ENCODE measurements at regions of chr4 and their contacts with region 1.

Region 1: DNA sequence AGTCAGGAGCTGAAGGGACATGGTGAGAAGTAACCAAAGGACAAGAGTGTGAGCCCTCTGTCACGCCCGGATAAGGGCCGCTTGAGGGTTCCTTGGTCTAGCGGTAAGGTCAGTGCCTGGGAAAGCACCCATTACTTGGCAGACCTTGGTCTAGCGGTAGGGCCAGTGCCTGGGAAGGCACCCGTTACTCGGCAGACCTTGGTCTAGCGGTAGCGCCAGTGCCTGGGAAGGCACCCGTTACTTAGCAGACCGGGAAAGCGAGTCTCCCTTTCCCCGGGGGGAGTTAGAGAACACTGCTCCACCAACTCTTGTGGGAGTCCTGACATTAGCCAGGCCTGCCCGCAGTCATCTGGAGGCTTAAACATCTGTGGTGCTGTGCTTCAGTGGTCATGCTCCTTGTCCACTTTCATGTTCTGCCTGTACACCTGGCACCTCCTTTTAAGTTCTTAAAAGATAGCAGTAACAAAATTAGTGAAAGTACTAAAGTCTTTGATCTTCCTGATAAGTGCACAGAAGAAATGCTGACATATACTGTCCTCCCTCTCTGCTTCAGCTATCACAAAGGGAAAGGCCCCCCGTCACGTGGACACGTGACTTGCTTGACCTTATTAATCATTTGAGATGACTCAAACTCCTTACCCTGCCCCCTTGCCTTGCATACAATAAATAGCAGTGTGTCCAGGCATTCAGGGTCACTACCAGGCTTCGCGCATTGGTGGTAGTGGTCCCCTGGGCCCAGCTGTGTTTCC is 9.3 kb upstream of the SEC24B start:
- DNase-seq: no peak
- ATAC-seq: no peak
- H3K4me3 ChIP-seq: no peak overlapping the region
- H3K4me3 Mint-ChIP-seq: no peak overlapping the region
- H3K27ac ChIP-seq: no peak overlapping the region
- H3K27ac Mint-ChIP-seq: no peak overlapping the region
- H3K4me1 ChIP-seq: no peaks in the 10 kb centered on the region
- H3K4me1 Mint-ChIP-seq: peaks cover 2% of the 10 kb centered on the region
- H3K27me3 ChIP-seq: no peaks in the 10 kb centered on the region
- H3K27me3 Mint-ChIP-seq: no peaks in the 10 kb centered on the region
- CTCF ChIP-seq: no peak

Region 2: DNA sequence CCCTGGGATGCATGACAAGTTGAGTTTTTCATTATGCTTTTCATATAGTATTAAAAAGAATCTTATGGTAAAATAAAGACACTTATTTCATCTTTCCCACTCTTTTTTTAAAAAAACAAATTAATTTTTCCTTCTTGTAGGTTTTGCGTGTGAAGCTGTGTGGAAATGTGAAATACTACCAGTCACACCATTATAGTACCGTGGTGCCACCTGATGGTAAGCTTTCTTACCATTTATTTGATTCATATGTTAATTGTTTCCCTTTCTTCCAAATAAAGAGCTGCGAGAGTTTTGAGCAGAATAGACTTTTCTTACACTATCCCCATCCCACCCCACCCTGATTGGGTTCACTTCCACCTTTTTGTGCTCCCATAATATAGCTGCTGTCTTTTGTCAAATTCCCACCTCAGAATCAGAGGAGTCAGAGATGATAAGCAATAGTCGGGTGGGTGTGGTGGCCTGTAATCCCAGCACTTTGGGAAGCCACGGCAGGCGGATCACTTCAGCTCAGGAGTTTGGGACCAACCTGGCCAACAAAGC is 234.7 kb after region 1 on chr4:
- CTCF ChIA-PET with region 1: interaction called, 4 read pairs
- POLR2A ChIA-PET with region 1: no interaction called
- intact Hi-C with region 1: loop called (anchors 1 kb)
- DNase-seq: peak in 3 of 9 experiments; percentile 27 to 53 (median 45)
- ATAC-seq: peak; percentile 58
- H3K4me3 ChIP-seq: no peak overlapping the region
- H3K4me3 Mint-ChIP-seq: no peak overlapping the region
- H3K27ac ChIP-seq: no peak overlapping the region
- H3K27ac Mint-ChIP-seq: peak overlapping the region; percentile 3
- H3K4me1 ChIP-seq: peaks cover 35% of the 10 kb centered on the region
- H3K4me1 Mint-ChIP-seq: peaks cover 59% of the 10 kb centered on the region
- H3K27me3 ChIP-seq: no peaks in the 10 kb centered on the region
- H3K27me3 Mint-ChIP-seq: no peaks in the 10 kb centered on the region
- CTCF ChIP-seq: no peak

Region 3: DNA sequence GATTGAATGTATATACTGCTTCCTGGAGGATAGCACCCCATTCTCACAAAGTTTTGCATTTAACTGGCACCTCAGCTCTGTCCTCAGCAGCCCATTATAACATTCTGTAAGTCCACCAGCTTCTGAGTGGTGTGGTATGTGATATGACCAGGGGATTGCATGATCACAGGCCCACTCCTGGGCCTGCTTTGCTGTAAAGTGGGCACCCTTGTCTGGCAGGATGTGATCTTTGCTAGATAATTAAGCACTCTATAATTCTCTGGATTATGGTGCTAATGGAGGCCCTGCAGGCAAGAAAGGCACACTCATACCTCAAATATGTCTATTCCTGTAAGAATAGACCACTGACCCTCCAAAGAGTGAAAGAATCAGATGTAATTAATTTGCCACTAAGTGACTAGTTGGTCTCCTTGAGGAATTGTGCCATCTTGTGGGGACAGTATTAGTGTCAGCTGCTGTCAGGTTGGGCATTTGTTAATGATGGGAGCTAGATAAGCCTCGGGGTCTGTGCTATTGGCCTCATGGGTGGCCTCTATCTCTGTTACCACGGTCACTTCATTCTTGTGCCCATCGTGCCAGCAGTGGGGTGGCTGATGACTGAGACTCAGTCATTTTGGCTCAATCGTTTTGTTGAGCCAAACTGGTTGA is 379.8 kb after region 1 on chr4:
- CTCF ChIA-PET with region 1: interaction called, 3 read pairs
- POLR2A ChIA-PET with region 1: no interaction called
- intact Hi-C with region 1: loop called in 1 of 2 experiments (anchors 1 kb)
- DNase-seq: peak in 2 of 9 experiments; percentile 54 to 59
- ATAC-seq: no peak
- H3K4me3 ChIP-seq: no peak overlapping the region
- H3K4me3 Mint-ChIP-seq: no peak overlapping the region
- H3K27ac ChIP-seq: no peak overlapping the region
- H3K27ac Mint-ChIP-seq: no peak overlapping the region
- H3K4me1 ChIP-seq: no peaks in the 10 kb centered on the region
- H3K4me1 Mint-ChIP-seq: no peaks in the 10 kb centered on the region
- H3K27me3 ChIP-seq: no peaks in the 10 kb centered on the region
- H3K27me3 Mint-ChIP-seq: peaks cover 5% of the 10 kb centered on the region
- CTCF ChIP-seq: no peak

Region 4: DNA sequence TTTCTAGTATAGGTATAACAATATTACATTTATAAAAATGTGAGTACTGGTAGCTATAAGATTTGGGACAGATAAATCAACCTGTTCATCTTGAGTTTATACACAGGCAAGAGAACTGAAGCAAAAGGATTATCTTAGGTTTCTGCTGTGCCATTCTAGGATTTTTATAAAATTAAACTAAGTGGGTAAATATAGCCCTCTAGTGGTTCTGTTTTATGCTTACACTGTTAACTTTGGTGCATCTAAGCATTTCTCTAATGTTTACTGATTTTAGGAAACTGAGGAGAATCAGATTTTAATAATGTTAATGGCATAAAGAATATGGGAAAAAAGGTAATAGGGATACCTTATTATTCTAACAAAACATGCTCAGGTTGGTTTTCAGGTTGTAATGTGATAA is 402.5 kb after region 1 on chr4:
- CTCF ChIA-PET with region 1: interaction called, 19 read pairs
- POLR2A ChIA-PET with region 1: no interaction called
- intact Hi-C with region 1: loop called (anchors 1 kb)
- DNase-seq: peak in 2 of 9 experiments; percentile 24 to 46
- ATAC-seq: peak; percentile 65
- H3K4me3 ChIP-seq: no peak overlapping the region
- H3K4me3 Mint-ChIP-seq: no peak overlapping the region
- H3K27ac ChIP-seq: no peak overlapping the region
- H3K27ac Mint-ChIP-seq: no peak overlapping the region
- H3K4me1 ChIP-seq: no peaks in the 10 kb centered on the region
- H3K4me1 Mint-ChIP-seq: peaks cover 2% of the 10 kb centered on the region
- H3K27me3 ChIP-seq: no peaks in the 10 kb centered on the region
- H3K27me3 Mint-ChIP-seq: no peaks in the 10 kb centered on the region
- CTCF ChIP-seq: peak; percentile 84

Region 5: GRCh38 chr4:109977854-109978501 is 553.7 kb after region 1 on chr4:
- CTCF ChIA-PET with region 1: interaction called, 15 read pairs
- POLR2A ChIA-PET with region 1: no interaction called
- intact Hi-C with region 1: loop called (anchors 1 kb)
- DNase-seq: peak in 2 of 9 experiments; percentile 29 to 47
- ATAC-seq: no peak
- H3K4me3 ChIP-seq: no peak overlapping the region
- H3K4me3 Mint-ChIP-seq: no peak overlapping the region
- H3K27ac ChIP-seq: no peak overlapping the region
- H3K27ac Mint-ChIP-seq: no peak overlapping the region
- H3K4me1 ChIP-seq: no peaks in the 10 kb centered on the region
- H3K4me1 Mint-ChIP-seq: no peaks in the 10 kb centered on the region
- H3K27me3 ChIP-seq: peaks cover 2 to 4% of the 10 kb centered on the region in 2 experiments
- H3K27me3 Mint-ChIP-seq: peaks cover 11% of the 10 kb centered on the region
- CTCF ChIP-seq: peak; percentile 49

Region 6: DNA sequence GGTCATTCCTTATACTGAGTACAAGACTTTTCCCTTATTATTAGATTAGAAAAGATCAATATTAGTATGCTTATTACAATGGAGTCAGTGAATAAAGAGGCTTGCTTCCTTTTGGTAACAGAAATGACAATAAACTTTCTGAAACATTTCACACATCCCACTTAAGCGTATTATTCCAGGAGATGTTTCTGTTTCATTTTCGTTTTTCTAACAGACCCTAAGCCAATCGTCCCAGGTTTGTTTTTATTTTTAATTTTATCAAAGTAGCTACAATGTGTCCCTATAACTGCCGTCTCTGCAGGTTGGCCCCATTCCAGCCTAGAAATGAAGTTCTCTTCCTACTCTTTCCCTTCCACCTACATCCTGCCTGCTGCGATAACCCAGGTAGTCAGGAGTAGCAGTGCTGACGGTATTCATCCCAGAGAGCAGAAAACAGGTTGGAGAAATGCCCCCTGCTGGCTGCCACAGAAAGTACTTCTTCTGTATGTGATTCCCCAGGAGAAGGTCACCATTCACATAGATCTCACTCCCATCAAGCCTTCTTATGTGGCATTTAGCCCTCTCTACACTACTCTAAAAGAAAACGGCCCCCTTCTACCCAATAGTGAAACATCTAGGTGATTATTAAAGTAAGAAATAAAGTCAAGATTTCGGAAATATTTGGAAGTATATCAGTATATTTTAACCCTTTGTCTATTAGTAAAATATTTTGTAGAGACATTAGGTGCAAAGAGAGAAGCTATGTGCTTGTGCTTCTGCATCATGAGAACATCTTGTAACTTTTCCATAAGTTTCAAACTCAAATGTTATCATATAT is 1092.0 kb after region 1 on chr4:
- CTCF ChIA-PET with region 1: interaction called, 3 read pairs
- POLR2A ChIA-PET with region 1: no interaction called
- intact Hi-C with region 1: loop called (anchors 2 kb)
- DNase-seq: peak; percentile 44 to 87 (median 76)
- ATAC-seq: peak; percentile 92
- H3K4me3 ChIP-seq: peak overlapping the region; percentile 66 to 75
- H3K4me3 Mint-ChIP-seq: peak overlapping the region; percentile 92
- H3K27ac ChIP-seq: peak overlapping the region; percentile 13 to 73
- H3K27ac Mint-ChIP-seq: peak overlapping the region; percentile 62
- H3K4me1 ChIP-seq: peaks cover 10% of the 10 kb centered on the region
- H3K4me1 Mint-ChIP-seq: peaks cover 14% of the 10 kb centered on the region
- H3K27me3 ChIP-seq: no peaks in the 10 kb centered on the region
- H3K27me3 Mint-ChIP-seq: peaks cover 14% of the 10 kb centered on the region
- CTCF ChIP-seq: peak; percentile 90

Measured in CD8-positive, alpha-beta T cell (primary cell).